Activated CD8-positive, alpha-beta T cell treated with anti-CD3 and anti-CD28 coated beads, Interleukin-2, amount 10 ng/mL, durations not matched to agents 7 days and 5 days (primary cell): ENCODE measurements at regions of chr1 and their contacts with region 1.

Region 1: DNA sequence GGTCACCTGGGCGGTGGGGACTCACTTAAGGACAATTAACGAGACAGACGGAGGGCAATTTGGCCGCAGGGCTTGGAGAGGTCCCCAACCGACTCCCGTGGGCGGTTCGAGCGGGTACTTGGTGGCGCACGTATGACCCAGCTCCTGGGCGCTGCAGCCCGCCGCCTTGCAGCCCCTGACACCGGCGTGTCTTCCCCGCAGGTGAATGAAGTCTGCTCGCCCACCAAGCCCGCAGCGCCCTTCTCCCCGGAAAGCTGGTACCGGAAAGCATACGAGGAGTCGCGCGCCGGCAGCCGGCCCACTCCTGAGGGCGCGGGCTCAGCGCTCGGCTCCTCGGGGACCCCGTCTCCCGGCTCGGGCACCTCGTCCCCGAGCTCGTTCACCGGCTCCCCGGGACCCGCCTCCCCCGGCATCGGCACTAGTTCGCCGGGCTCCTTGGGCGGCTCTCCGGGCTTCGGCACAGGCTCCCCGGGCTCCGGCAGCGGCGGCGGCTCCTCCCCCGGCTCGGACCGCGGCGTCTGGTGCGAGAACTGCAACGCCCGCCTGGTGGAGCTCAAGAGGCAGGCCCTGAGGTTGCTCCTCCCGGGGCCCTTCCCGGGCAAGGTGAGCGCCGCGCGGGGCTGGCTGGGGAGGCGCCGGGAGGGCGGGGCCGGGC is 1.4 kb downstream of the KIF26B start:
- DNase-seq: peak; percentile 91
- ATAC-seq: peak; percentile 92
- H3K4me3 Mint-ChIP-seq: peak overlapping the region; percentile 75
- H3K27ac Mint-ChIP-seq: no peak overlapping the region
- H3K4me1 Mint-ChIP-seq: peaks cover 26% of the 10 kb centered on the region
- H3K27me3 Mint-ChIP-seq: peaks cover 56% of the 10 kb centered on the region

Region 2: GRCh38 chr1:245166471-245166885 is 10.3 kb after region 1 on chr1:
- CTCF ChIA-PET with region 1: interaction called, 22 read pairs
- POLR2A ChIA-PET with region 1: no interaction called
- DNase-seq: no peak
- ATAC-seq: no peak
- H3K4me3 Mint-ChIP-seq: no peak overlapping the region
- H3K27ac Mint-ChIP-seq: no peak overlapping the region
- H3K4me1 Mint-ChIP-seq: peaks cover 28% of the 10 kb centered on the region
- H3K27me3 Mint-ChIP-seq: peaks cover 44% of the 10 kb centered on the region

Region 3: GRCh38 chr1:245177071-245177900 is 21.1 kb after region 1 on chr1:
- CTCF ChIA-PET with region 1: no interaction called
- POLR2A ChIA-PET with region 1: no interaction called
- DNase-seq: no peak
- ATAC-seq: no peak
- H3K4me3 Mint-ChIP-seq: no peak overlapping the region
- H3K27ac Mint-ChIP-seq: no peak overlapping the region
- H3K4me1 Mint-ChIP-seq: peaks cover 24% of the 10 kb centered on the region
- H3K27me3 Mint-ChIP-seq: no peaks in the 10 kb centered on the region

Region 4: DNA sequence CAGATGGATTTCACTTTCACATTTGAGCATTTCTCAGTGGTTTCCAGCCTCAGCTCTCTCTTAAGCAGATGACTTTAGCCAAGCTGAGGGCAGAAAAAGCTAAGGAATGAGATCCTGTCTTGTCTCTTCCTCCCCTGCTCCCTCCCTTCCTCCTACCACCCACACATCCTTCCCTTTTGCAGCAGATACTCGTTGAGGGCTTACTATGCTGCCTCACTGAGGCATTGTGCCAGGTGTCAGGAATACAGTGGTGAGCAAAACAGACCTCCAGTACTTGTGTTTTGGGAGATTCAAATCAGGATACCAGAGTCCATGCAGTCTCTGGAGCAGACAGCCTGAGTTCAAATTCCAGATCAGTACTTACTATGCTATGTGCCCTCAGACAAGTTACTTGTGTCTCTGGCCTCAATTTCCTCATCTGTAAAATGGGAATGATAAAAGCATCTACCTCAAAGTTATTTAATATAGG is 41.7 kb after region 1 on chr1:
- CTCF ChIA-PET with region 1: no interaction called
- POLR2A ChIA-PET with region 1: no interaction called
- DNase-seq: no peak
- ATAC-seq: no peak
- H3K4me3 Mint-ChIP-seq: no peak overlapping the region
- H3K27ac Mint-ChIP-seq: no peak overlapping the region
- H3K4me1 Mint-ChIP-seq: peaks cover 8% of the 10 kb centered on the region
- H3K27me3 Mint-ChIP-seq: peaks cover 15% of the 10 kb centered on the region

Region 5: DNA sequence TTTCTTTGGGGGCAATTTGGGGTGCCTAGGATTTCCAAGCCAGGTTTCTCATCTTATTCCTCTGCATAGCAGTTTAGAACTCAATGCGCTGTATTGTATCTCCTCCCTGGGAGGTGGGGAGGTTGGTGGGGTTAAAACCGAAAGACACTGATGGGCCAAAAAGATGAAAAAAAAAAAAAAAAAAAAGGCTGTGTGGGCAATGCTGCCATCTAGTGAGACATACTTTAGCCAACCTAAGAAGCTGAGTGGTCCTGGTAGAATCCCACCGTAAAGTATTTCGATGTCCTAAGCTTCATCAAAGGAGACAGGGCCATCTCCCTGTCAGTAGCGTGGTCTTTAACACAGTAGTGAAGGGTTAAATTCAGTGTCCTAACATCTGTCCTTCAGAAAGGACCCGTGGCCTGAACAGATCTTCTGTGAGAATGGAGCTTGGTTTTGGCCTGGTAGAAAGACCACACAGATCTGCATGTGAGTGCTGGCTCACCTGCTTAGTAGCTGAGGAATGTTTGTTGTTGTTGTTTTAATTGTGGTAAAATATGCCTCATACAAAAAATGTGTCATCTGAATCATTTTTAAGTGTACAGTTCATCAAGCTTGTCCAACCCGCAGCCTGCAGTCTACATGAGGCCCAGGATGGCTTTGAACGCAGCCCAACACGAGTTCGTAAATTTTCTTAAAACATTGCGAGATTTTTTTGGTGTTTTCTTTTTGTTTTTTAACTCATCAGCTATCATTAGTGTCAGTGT is 224.8 kb after region 1 on chr1:
- CTCF ChIA-PET with region 1: interaction called, 27 read pairs
- POLR2A ChIA-PET with region 1: no interaction called
- DNase-seq: no peak
- ATAC-seq: no peak
- H3K4me3 Mint-ChIP-seq: no peak overlapping the region
- H3K27ac Mint-ChIP-seq: no peak overlapping the region
- H3K4me1 Mint-ChIP-seq: peaks cover 24% of the 10 kb centered on the region
- H3K27me3 Mint-ChIP-seq: peaks cover 12% of the 10 kb centered on the region

Region 6: GRCh38 chr1:245999696-246000637 is 843.8 kb after region 1 on chr1:
- CTCF ChIA-PET with region 1: interaction called, 17 read pairs
- POLR2A ChIA-PET with region 1: no interaction called
- DNase-seq: no peak
- ATAC-seq: no peak
- H3K4me3 Mint-ChIP-seq: no peak overlapping the region
- H3K27ac Mint-ChIP-seq: no peak overlapping the region
- H3K4me1 Mint-ChIP-seq: no peaks in the 10 kb centered on the region
- H3K27me3 Mint-ChIP-seq: no peaks in the 10 kb centered on the region

Region 7: DNA sequence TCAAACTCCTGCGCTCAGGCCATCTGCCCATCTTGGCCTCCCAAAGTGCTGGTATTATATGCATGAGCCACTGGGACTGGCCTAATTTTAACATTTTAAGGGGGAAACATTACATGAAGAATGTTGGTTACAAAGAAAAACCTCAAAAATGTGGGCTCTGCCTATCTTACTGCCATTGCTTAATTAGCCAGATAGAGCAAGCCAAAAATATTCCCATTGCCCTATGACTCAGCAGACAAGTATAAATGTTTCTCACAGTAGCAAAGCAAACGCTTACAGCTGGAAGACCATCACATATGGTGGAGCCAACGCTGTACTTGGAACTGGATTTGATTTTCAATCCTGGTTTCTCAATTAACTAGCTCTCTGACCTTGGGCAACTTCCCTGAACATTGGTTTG is 848.9 kb after region 1 on chr1:
- CTCF ChIA-PET with region 1: interaction called, 17 read pairs
- POLR2A ChIA-PET with region 1: no interaction called
- DNase-seq: no peak
- ATAC-seq: no peak
- H3K4me3 Mint-ChIP-seq: no peak overlapping the region
- H3K27ac Mint-ChIP-seq: no peak overlapping the region
- H3K4me1 Mint-ChIP-seq: no peaks in the 10 kb centered on the region
- H3K27me3 Mint-ChIP-seq: no peaks in the 10 kb centered on the region